ENCODE measurements at regions of chr19 and their contacts with region 1.

Region 1: GRCh38 chr19:45370410-45371204 is at the start of gene ERCC2:
- DNase-seq: peak; percentile 100
- H3K4me3 Mint-ChIP-seq: peak within 1 kb of the TSS; percentile 89
- H3K27ac Mint-ChIP-seq: peak within 1 kb of the TSS; percentile 95
- H3K4me1 Mint-ChIP-seq: peaks cover 15% of the 10 kb centered on the region
- H3K27me3 Mint-ChIP-seq: no peaks in the 10 kb centered on the region
- total RNA-seq, gene ERCC2: 30.5 and 32.8 TPM in 2 replicates

Region 2: GRCh38 chr19:45001087-45001739 is 369.4 kb before region 1 on chr19 and contains the start of gene RELB:
- intact Hi-C with region 1: loop called (anchors 2 kb)
- DNase-seq: peak; percentile 96
- H3K4me3 Mint-ChIP-seq: peak within 1 kb of the TSS; percentile 91
- H3K27ac Mint-ChIP-seq: peak within 1 kb of the TSS; percentile 97
- H3K4me1 Mint-ChIP-seq: peaks cover 11% of the 10 kb centered on the region
- H3K27me3 Mint-ChIP-seq: no peaks in the 10 kb centered on the region
- total RNA-seq, gene RELB: 73.3 and 77.5 TPM in 2 replicates

Region 3: DNA sequence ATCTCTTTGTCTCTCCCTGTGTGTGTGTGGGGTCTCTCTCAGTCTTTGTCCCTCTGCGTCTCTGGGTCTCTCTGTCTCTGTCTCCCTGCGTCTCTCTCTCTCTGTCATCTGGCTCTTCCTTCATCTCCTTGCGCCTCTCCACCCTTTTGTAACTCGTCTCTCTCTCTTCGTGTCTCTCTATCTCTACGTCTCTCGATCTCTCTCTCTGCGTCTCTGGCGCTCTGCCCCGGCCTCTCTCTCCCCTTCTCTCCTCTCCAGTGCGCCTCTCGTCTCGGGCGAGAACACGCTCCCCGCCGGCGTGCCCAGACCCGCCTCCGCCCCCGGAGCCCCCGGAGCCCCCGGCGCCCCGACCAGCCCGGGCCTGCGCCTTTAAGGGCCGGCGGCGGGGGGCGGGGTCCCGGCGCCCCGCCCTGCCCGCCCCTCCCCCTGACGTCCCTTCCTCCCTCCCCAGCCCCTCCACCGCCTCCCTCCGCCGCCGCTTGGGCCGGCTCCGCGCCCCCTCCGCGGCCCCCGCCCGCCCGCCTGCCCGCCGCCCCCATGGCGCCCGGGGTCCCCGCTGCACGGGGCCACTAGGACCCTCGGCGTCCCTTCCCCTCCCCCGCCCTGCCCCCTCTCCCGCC is 119.7 kb before region 1 on chr19 and contains the start of gene MARK4:
- intact Hi-C with region 1: loop called (anchors 1 kb)
- DNase-seq: peak; percentile 40
- H3K4me3 Mint-ChIP-seq: peak within 1 kb of the TSS; percentile 87
- H3K27ac Mint-ChIP-seq: peak within 1 kb of the TSS; percentile 70
- H3K4me1 Mint-ChIP-seq: peaks cover 19% of the 10 kb centered on the region
- H3K27me3 Mint-ChIP-seq: peaks cover 2% of the 10 kb centered on the region
- total RNA-seq, gene MARK4: 27.1 and 27.2 TPM in 2 replicates

Region 4: DNA sequence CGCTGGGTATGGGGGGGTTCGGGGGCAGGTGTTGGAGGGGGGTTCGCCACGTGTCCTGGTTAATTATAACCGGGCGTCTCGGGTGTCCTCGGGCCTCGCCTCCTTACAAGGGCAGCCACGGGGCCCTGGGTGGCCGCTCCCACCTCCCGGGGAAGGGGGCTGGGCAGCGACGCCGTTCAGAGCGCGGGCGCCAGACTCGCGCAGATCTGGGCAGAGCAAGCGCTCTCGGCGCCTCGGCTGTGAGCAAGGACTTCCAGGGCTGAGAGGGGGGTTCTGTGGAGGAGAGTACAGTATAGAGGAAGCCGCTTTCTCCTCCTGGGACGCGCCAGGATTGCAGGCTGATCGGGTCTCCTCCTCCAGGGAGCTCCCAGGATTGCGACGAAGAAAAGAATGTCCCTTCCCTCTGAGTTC is 46.9 kb before region 1 on chr19:
- intact Hi-C with region 1: no loop called
- DNase-seq: no peak
- H3K4me3 Mint-ChIP-seq: no peak overlapping the region
- H3K27ac Mint-ChIP-seq: no peak overlapping the region
- H3K4me1 Mint-ChIP-seq: no peaks in the 10 kb centered on the region
- H3K27me3 Mint-ChIP-seq: peaks cover 22% of the 10 kb centered on the region

Region 5: GRCh38 chr19:45340232-45340898 is 30.2 kb before region 1 on chr19 and contains the start of gene KLC3:
- intact Hi-C with region 1: loop called (anchors 1 kb)
- DNase-seq: peak; percentile 35
- H3K4me3 Mint-ChIP-seq: peak within 1 kb of the TSS; percentile 54
- H3K27ac Mint-ChIP-seq: no peak within 1 kb of the TSS
- H3K4me1 Mint-ChIP-seq: peaks cover 6% of the 10 kb centered on the region
- H3K27me3 Mint-ChIP-seq: peaks cover 10% of the 10 kb centered on the region
- total RNA-seq, gene KLC3: not detected in 2 replicates

Region 6: GRCh38 chr19:45439569-45440254 is 69.1 kb after region 1 on chr19:
- intact Hi-C with region 1: loop called (anchors 1 kb)
- DNase-seq: peak; percentile 73
- H3K4me3 Mint-ChIP-seq: peak overlapping the region; percentile 77
- H3K27ac Mint-ChIP-seq: peak overlapping the region; percentile 71
- H3K4me1 Mint-ChIP-seq: peaks cover 34% of the 10 kb centered on the region
- H3K27me3 Mint-ChIP-seq: peaks cover 3% of the 10 kb centered on the region

Region 7: GRCh38 chr19:45730389-45731288 is 360.0 kb after region 1 on chr19 and contains the start of gene FBXO46:
- intact Hi-C with region 1: loop called (anchors 1 kb)
- DNase-seq: peak; percentile 95
- H3K4me3 Mint-ChIP-seq: peak within 1 kb of the TSS; percentile 99
- H3K27ac Mint-ChIP-seq: peak within 1 kb of the TSS; percentile 85
- H3K4me1 Mint-ChIP-seq: peaks cover 26% of the 10 kb centered on the region
- H3K27me3 Mint-ChIP-seq: peaks cover 2% of the 10 kb centered on the region
- total RNA-seq, gene FBXO46: 35.1 and 35.4 TPM in 2 replicates

Measured in activated T-helper 1 cell treated with anti-CD3 and anti-CD28 coated beads, Interleukin-12 subunit alpha, Interleukin-12 subunit beta, Interleukin-2, Interleukin-4 antibody, amounts not matched to agents 30 ng/mL and 10 ng/mL and 1 ng/mL, durations not matched to agents 14 hours and 24 hours and 36 hours (primary cell).